Activated T-helper 2 cell treated with anti-CD3 and anti-CD28 coated beads, Interferon-gamma antibody, Interleukin-2, Interleukin-4, amounts not matched to agents 10 μg/mL and 5 μg/mL and 100 μg/mL, durations not matched to agents 14 hours and 24 hours and 36 hours (primary cell): ENCODE measurements at regions of chr3 and their contacts with region 1.

Region 1: GRCh38 chr3:60010781-60011180 is 961.0 kb upstream of the CFAP20DC start:
- DNase-seq: peak; percentile 72
- H3K4me3 Mint-ChIP-seq: peak overlapping the region; percentile 49
- H3K27ac Mint-ChIP-seq: peak overlapping the region; percentile 85
- H3K4me1 Mint-ChIP-seq: peaks cover 67% of the 10 kb centered on the region
- H3K27me3 Mint-ChIP-seq: no peaks in the 10 kb centered on the region

Region 2: DNA sequence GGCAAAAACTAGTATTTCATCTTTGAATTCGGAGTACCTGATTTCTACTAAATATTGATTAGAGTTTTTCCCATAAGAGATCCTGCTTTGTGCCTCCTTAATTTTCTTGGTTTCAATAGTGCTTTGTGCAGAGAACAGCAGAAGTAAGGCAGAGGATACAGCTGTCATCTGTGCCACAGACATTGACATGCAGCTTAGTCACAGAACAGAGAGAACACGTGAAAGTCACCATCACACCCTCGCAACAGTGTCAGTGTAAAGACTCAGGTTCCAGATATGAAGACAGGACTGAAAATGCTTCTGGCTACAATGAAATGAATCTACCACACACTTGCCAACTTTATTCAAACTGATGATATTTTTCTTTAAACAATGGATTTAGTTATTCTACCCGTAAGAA is 18.2 kb before region 1 on chr3:
- intact Hi-C with region 1: loop called (anchors 1 kb)
- DNase-seq: no peak
- H3K4me3 Mint-ChIP-seq: no peak overlapping the region
- H3K27ac Mint-ChIP-seq: no peak overlapping the region
- H3K4me1 Mint-ChIP-seq: peaks cover 56% of the 10 kb centered on the region
- H3K27me3 Mint-ChIP-seq: no peaks in the 10 kb centered on the region